B cell (primary cell): ENCODE measurements at regions of chr17 and their contacts with region 1.

Region 1: GRCh38 chr17:32877164-32877764 is 340 bp upstream of the MYO1D start:
- DNase-seq: peak; percentile 96
- ATAC-seq: peak; percentile 94
- H3K4me3 ChIP-seq: peak overlapping the region in 4 of 5 experiments; percentile 36 to 85 (median 75)
- H3K4me3 Mint-ChIP-seq: peak overlapping the region; percentile 85
- H3K27ac ChIP-seq: peak overlapping the region; percentile 70 to 77
- H3K27ac Mint-ChIP-seq: peak overlapping the region; percentile 90
- H3K4me1 ChIP-seq: peaks cover 12 to 19% of the 10 kb centered on the region in 2 donors
- H3K4me1 Mint-ChIP-seq: peaks cover 20% of the 10 kb centered on the region
- H3K27me3 ChIP-seq: no peaks in the 10 kb centered on the region
- H3K27me3 Mint-ChIP-seq: peaks cover 4% of the 10 kb centered on the region
- CTCF ChIP-seq: peak; percentile 77

Region 2: DNA sequence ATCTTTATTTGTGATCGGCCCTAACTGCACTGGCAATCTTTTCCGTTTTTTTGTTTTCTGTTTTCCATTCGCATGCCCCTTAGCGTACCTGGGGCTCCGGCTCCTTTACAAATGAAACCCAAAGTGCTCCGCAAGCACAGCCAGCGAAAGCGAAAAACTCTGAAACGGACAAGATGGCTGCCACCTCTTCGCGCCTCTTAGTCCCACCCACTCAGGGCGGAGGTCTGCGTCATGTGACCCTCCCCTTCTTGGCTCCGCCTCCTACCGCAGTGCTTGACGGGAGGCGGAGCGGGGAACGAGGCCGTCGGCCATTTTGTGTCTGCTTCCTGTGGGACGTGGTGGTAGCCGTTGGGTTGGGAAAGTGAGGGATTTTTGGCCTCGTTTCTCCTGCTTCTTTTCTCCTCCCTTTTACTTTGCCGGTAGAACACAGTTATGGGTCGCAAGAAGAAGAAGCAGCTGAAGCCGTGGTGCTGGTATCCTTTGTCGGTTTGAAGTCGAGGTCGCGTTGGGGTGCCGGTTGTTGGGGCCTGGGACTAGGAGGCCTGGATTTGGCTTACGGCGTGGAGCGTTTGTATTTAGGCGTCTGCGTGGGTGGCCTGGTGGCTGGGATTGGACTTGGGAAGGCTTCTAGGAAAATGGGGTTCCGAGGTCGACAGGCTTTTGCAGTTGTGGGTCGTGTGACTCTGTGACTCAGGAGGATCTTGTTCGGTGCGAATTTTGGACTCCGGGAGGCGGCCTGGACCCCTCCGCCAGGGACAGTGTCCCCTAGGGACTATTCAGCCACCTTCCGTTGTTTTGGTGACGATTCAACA is 527.2 kb before region 1 on chr17 and contains the start of gene ZNF207:
- CTCF ChIA-PET with region 1: no interaction called
- POLR2A ChIA-PET with region 1: no interaction called
- intact Hi-C with region 1: loop called (anchors 10 kb)
- DNase-seq: peak; percentile 98
- ATAC-seq: peak; percentile 98
- H3K4me3 ChIP-seq: peak within 1 kb of the TSS; percentile 56 to 97 (median 89)
- H3K4me3 Mint-ChIP-seq: peak within 1 kb of the TSS; percentile 99
- H3K27ac ChIP-seq: peak within 1 kb of the TSS; percentile 86 to 98
- H3K27ac Mint-ChIP-seq: peak within 1 kb of the TSS; percentile 100
- H3K4me1 ChIP-seq: peaks cover 28 to 32% of the 10 kb centered on the region in 2 donors
- H3K4me1 Mint-ChIP-seq: peaks cover 35% of the 10 kb centered on the region
- H3K27me3 ChIP-seq: no peaks in the 10 kb centered on the region
- H3K27me3 Mint-ChIP-seq: no peaks in the 10 kb centered on the region
- CTCF ChIP-seq: no peak
- total RNA-seq, gene ZNF207: 314 and 332 TPM in 2 replicates

Region 3: DNA sequence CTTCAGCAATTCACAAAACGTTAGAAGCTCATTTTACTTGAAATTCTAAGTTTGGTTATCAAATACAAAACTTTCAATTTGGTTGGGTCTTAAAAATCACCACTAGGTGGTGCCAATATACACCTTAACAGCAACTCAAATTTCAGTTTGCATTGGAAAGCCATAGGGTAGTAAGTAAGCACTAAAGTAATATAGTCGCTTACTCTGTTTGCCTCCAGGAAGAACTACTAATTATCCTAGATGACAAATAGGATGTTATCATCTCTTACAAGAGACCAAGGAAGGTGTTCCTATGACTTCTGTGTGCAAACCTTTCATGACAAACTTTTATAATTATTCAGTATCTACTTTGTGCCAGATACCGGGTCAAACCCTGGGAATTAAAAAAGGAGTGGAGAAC is 93.7 kb before region 1 on chr17:
- CTCF ChIA-PET with region 1: interaction called, 175 read pairs
- POLR2A ChIA-PET with region 1: interaction called, 8 read pairs
- intact Hi-C with region 1: loop called (anchors 1 kb)
- DNase-seq: peak; percentile 67
- ATAC-seq: peak; percentile 36
- H3K4me3 ChIP-seq: no peak overlapping the region
- H3K4me3 Mint-ChIP-seq: no peak overlapping the region
- H3K27ac ChIP-seq: no peak overlapping the region
- H3K27ac Mint-ChIP-seq: no peak overlapping the region
- H3K4me1 ChIP-seq: no peaks in the 10 kb centered on the region
- H3K4me1 Mint-ChIP-seq: no peaks in the 10 kb centered on the region
- H3K27me3 ChIP-seq: no peaks in the 10 kb centered on the region
- H3K27me3 Mint-ChIP-seq: no peaks in the 10 kb centered on the region
- CTCF ChIP-seq: peak; percentile 88

Region 4: GRCh38 chr17:32862940-32863339 is 14.3 kb before region 1 on chr17:
- CTCF ChIA-PET with region 1: interaction called, 20 read pairs
- POLR2A ChIA-PET with region 1: no interaction called
- intact Hi-C with region 1: no loop called
- DNase-seq: no peak
- ATAC-seq: no peak
- H3K4me3 ChIP-seq: no peak overlapping the region
- H3K4me3 Mint-ChIP-seq: no peak overlapping the region
- H3K27ac ChIP-seq: no peak overlapping the region
- H3K27ac Mint-ChIP-seq: no peak overlapping the region
- H3K4me1 ChIP-seq: no peaks in the 10 kb centered on the region
- H3K4me1 Mint-ChIP-seq: no peaks in the 10 kb centered on the region
- H3K27me3 ChIP-seq: no peaks in the 10 kb centered on the region
- H3K27me3 Mint-ChIP-seq: peaks cover 4% of the 10 kb centered on the region
- CTCF ChIP-seq: no peak

Region 5: DNA sequence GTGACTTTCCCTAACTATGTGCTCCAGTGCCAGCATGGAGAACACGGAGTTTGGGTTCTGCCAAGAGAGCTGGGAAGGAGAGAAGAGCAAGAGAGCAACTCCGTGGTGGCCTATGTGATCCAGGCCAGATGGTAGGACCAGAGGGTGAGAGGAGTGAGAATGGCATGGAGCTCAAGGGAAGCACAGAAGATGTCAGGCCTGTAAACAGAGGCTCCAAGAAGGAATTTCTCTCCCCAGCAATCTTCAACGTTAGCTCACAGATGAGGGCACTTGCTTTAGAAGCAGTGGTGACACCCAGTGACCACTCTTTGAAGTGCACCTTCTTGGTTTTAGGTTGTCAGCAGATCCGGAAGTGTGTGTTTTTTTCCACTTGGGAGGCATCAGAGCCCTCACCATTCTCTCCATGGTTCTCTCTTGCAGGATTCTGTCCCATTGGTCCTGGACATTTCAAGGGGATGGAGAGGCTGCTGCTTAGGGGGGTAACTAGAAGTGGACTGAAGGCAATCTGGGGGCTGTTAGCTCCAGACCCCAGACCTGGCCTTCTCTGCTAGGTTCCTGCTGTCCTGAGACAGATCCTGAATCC is 32.6 kb after region 1 on chr17:
- CTCF ChIA-PET with region 1: interaction called, 48 read pairs
- POLR2A ChIA-PET with region 1: no interaction called
- intact Hi-C with region 1: loop called (anchors 1 kb)
- DNase-seq: peak; percentile 76
- ATAC-seq: peak; percentile 85
- H3K4me3 ChIP-seq: no peak overlapping the region
- H3K4me3 Mint-ChIP-seq: no peak overlapping the region
- H3K27ac ChIP-seq: no peak overlapping the region
- H3K27ac Mint-ChIP-seq: no peak overlapping the region
- H3K4me1 ChIP-seq: no peaks in the 10 kb centered on the region
- H3K4me1 Mint-ChIP-seq: peaks cover 3% of the 10 kb centered on the region
- H3K27me3 ChIP-seq: peaks cover 0 to 3% (median 1%) of the 10 kb centered on the region in 4 experiments
- H3K27me3 Mint-ChIP-seq: peaks cover 6% of the 10 kb centered on the region
- CTCF ChIP-seq: peak; percentile 82